Activated CD4-positive, alpha-beta memory T cell treated with anti-CD3 and anti-CD28 coated beads, Interleukin-2, amount 10 ng/mL, durations not matched to agents 7 days and 5 days (primary cell): ENCODE measurements at regions of chr9 and their contacts with region 1.

Region 1: GRCh38 chr9:130042833-130043653 is at the start of gene FNBP1:
- DNase-seq: peak; percentile 85
- H3K4me3 Mint-ChIP-seq: peak within 1 kb of the TSS; percentile 90
- H3K27ac Mint-ChIP-seq: peak within 1 kb of the TSS; percentile 91
- H3K4me1 Mint-ChIP-seq: peaks cover 47% of the 10 kb centered on the region
- H3K27me3 Mint-ChIP-seq: no peaks in the 10 kb centered on the region
- total RNA-seq, gene FNBP1: 208 to 213 TPM

Region 2: GRCh38 chr9:129932303-129933151 is 110.5 kb before region 1 on chr9:
- CTCF ChIA-PET with region 1: interaction called, 4 read pairs
- POLR2A ChIA-PET with region 1: interaction called, 58 read pairs
- DNase-seq: no peak
- H3K4me3 Mint-ChIP-seq: peak overlapping the region; percentile 63
- H3K27ac Mint-ChIP-seq: peak overlapping the region; percentile 77
- H3K4me1 Mint-ChIP-seq: peaks cover 62% of the 10 kb centered on the region
- H3K27me3 Mint-ChIP-seq: no peaks in the 10 kb centered on the region

Region 3: GRCh38 chr9:129962889-129963703 is 79.9 kb before region 1 on chr9:
- CTCF ChIA-PET with region 1: interaction called, 7 read pairs
- POLR2A ChIA-PET with region 1: interaction called, 54 read pairs
- DNase-seq: peak; percentile 83
- H3K4me3 Mint-ChIP-seq: peak overlapping the region; percentile 74
- H3K27ac Mint-ChIP-seq: peak overlapping the region; percentile 93
- H3K4me1 Mint-ChIP-seq: peaks cover 73% of the 10 kb centered on the region
- H3K27me3 Mint-ChIP-seq: no peaks in the 10 kb centered on the region

Region 4: GRCh38 chr9:129995409-129996160 is 47.5 kb before region 1 on chr9:
- CTCF ChIA-PET with region 1: interaction called, 11 read pairs
- POLR2A ChIA-PET with region 1: interaction called, 97 read pairs
- DNase-seq: no peak
- H3K4me3 Mint-ChIP-seq: peak overlapping the region; percentile 49
- H3K27ac Mint-ChIP-seq: peak overlapping the region; percentile 87
- H3K4me1 Mint-ChIP-seq: peaks cover 82% of the 10 kb centered on the region
- H3K27me3 Mint-ChIP-seq: no peaks in the 10 kb centered on the region

Region 5: DNA sequence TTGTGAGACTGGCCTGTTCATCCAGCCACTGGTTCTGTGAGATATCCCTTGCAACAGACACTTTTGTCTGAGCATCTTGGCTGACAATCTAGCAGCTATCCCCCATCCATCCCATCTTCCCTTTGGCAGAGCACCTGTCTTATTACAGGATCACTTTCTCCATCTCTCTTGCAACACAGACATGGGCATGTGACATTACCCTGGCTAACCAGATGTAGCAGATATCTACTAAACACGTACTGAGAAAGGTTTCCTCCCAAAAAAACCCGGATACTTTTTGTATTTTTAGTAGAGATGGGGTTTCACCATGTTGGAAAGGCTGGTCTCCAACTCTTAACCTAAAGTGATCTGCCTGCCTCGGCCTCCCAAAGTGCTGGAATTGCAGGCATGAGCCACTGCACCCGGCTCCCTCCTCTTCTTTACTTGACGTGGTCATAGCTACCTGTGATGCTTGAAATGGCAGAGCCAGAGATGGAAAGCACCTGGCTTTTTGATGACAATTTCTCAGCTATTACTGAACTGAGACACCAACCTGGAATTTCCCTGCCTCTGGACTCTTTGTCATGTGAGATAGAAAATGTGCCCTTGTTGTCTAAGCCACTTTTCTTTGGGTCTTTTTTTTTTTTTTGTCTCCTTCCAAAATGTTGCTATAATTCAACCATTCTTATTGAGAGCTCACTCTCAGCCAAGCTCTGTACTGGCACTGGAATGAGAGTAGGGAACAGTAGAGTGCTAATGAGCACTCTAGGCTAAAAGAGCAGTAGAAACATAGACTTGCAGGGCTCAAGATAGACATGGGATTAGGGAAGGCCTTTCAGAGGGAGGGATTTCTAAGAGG is 32.7 kb before region 1 on chr9:
- CTCF ChIA-PET with region 1: interaction called, 12 read pairs
- POLR2A ChIA-PET with region 1: interaction called, 27 read pairs
- DNase-seq: no peak
- H3K4me3 Mint-ChIP-seq: no peak overlapping the region
- H3K27ac Mint-ChIP-seq: peak overlapping the region; percentile 66
- H3K4me1 Mint-ChIP-seq: peaks cover 78% of the 10 kb centered on the region
- H3K27me3 Mint-ChIP-seq: no peaks in the 10 kb centered on the region

Region 6: GRCh38 chr9:130023144-130023787 is 19.8 kb before region 1 on chr9:
- CTCF ChIA-PET with region 1: interaction called, 22 read pairs
- POLR2A ChIA-PET with region 1: interaction called, 119 read pairs
- DNase-seq: no peak
- H3K4me3 Mint-ChIP-seq: no peak overlapping the region
- H3K27ac Mint-ChIP-seq: peak overlapping the region; percentile 53
- H3K4me1 Mint-ChIP-seq: peaks cover 86% of the 10 kb centered on the region
- H3K27me3 Mint-ChIP-seq: no peaks in the 10 kb centered on the region

Region 7: DNA sequence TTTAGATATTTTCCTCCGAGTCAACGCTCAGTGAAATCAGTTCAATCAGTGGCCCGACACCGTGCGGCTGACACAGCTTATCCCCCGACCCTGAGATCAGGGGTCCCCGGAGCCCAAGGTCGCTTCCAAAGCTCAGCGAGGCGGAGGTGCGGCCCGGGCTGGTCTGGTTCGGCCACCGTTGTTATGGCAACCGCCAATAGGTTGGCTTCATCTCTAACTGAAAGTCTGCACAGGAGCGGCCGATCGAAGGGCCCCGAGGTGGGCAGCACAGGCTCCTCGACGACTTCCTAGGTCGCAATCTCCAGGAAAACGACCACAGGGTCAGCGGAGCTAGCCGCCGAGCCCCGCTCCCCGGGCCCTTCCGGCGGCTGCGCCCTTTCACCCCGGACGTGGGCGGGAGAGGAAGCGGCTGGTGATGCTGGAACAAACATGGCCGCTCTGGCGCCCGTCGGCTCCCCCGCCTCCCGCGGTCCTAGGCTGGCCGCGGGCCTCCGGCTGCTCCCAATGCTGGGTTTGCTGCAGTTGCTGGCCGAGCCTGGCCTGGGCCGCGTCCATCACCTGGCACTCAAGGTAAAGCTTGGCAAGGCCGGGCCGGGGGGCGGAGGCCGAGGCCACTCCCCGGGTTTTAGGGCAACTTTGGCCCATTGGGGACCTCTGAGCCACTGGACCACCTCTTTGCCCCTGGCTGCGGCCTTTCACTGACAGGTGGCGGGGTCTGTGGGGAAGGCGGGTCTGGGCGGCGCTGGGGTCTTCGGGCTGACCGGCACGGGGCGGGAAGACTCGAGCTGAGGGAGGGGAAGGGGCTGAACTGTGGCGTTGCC is 10.7 kb after region 1 on chr9 and contains the start of gene GPR107:
- CTCF ChIA-PET with region 1: interaction called, 9 read pairs
- POLR2A ChIA-PET with region 1: interaction called, 64 read pairs
- DNase-seq: peak; percentile 82
- H3K4me3 Mint-ChIP-seq: peak within 1 kb of the TSS; percentile 92
- H3K27ac Mint-ChIP-seq: peak within 1 kb of the TSS; percentile 91
- H3K4me1 Mint-ChIP-seq: peaks cover 42% of the 10 kb centered on the region
- H3K27me3 Mint-ChIP-seq: no peaks in the 10 kb centered on the region
- total RNA-seq, gene GPR107: 25.1 to 26.3 TPM